ENCODE measurements at regions of chr2 and their contacts with region 1.

Region 1: GRCh38 chr2:70086838-70087701 is at the start of gene PCBP1:
- DNase-seq: peak; percentile 98
- ATAC-seq: peak; percentile 90
- H3K4me3 ChIP-seq: peak within 1 kb of the TSS; percentile 94
- H3K27ac ChIP-seq: peak within 1 kb of the TSS; percentile 100
- H3K4me1 ChIP-seq: peaks cover 36% of the 10 kb centered on the region
- H3K27me3 ChIP-seq: no peaks in the 10 kb centered on the region
- CTCF ChIP-seq: no peak
- total RNA-seq, gene PCBP1: 337 TPM

Region 2: GRCh38 chr2:68737711-68738110 is 1349.4 kb before region 1 on chr2:
- intact Hi-C with region 1: no loop called
- DNase-seq: no peak
- ATAC-seq: peak; percentile 59
- H3K4me3 ChIP-seq: peak overlapping the region; percentile 47
- H3K27ac ChIP-seq: peak overlapping the region; percentile 59
- H3K4me1 ChIP-seq: peaks cover 25% of the 10 kb centered on the region
- H3K27me3 ChIP-seq: no peaks in the 10 kb centered on the region
- CTCF ChIP-seq: no peak

Region 3: GRCh38 chr2:69948032-69948962 is 138.8 kb before region 1 on chr2:
- intact Hi-C with region 1: no loop called
- DNase-seq: no peak
- ATAC-seq: no peak
- H3K4me3 ChIP-seq: no peak overlapping the region
- H3K27ac ChIP-seq: no peak overlapping the region
- H3K4me1 ChIP-seq: peaks cover 8% of the 10 kb centered on the region
- H3K27me3 ChIP-seq: peaks cover 6% of the 10 kb centered on the region
- CTCF ChIP-seq: no peak

Region 4: DNA sequence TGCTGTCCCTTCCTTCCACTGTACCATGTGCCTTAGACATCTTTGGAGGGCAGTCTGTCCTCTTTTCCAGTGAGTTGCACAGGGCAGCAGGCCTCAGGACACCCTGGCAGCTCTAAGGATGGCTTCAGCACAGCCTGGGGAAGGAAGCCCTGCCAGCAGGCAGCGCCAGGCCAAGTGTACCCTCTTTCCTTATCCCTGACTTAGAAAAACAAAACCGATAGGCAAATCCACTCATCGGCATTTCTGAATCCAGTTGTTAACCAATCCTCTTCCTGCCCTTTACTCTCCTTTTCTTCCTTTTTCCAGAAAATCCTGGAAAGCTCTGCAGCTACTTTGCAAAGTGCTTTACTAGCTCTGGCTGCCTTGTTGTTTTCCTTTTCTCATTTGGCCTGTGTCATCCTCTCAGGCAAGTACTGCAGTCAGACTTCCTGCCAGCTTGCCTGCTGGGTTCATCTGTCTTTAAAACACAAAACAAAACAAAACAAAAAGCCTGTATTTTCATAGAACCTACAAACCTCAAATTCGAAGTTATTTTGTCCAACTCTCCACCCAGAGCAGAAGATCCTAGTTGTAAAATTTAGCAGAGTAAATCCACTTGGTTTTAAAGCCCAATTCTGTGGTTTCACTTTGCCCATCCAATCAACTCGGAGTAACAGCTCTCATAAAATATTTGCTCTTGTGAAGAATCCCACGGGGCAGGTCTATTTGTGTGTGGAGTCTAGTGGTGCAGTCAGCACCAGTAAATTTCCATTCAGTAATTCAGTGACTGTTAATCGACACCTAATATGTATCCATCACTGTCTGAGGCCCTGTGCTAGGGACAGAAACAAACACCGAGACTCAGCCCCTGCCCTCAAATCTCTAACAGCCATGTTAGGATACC is 45.4 kb after region 1 on chr2:
- intact Hi-C with region 1: loop called (anchors 5 kb)
- DNase-seq: no peak
- ATAC-seq: peak; percentile 74
- H3K4me3 ChIP-seq: peak overlapping the region; percentile 43
- H3K27ac ChIP-seq: peak overlapping the region; percentile 93
- H3K4me1 ChIP-seq: peaks cover 57% of the 10 kb centered on the region
- H3K27me3 ChIP-seq: no peaks in the 10 kb centered on the region
- CTCF ChIP-seq: no peak

Region 5: GRCh38 chr2:70258532-70258874 is 171.4 kb after region 1 on chr2:
- intact Hi-C with region 1: no loop called
- DNase-seq: peak; percentile 83
- ATAC-seq: peak; percentile 46
- H3K4me3 ChIP-seq: peak overlapping the region; percentile 80
- H3K27ac ChIP-seq: peak overlapping the region; percentile 84
- H3K4me1 ChIP-seq: peaks cover 28% of the 10 kb centered on the region
- H3K27me3 ChIP-seq: no peaks in the 10 kb centered on the region
- CTCF ChIP-seq: no peak

Measured in upper lobe of right lung (tissue), 1 donor.